ENCODE measurements at regions of chr11 and their contacts with region 1.

Region 1: GRCh38 chr11:14892036-14892567 is at the start of gene CYP2R1:
- DNase-seq: peak; percentile 98
- H3K4me3 ChIP-seq: peak within 1 kb of the TSS; percentile 69 to 91 (median 78)
- H3K27ac ChIP-seq: peak within 1 kb of the TSS; percentile 86 to 98 (median 92)
- H3K4me1 ChIP-seq: peaks cover 17 to 30% (median 22%) of the 10 kb centered on the region in 4 donors
- H3K27me3 ChIP-seq: no peaks in the 10 kb centered on the region
- CTCF ChIP-seq: no peak
- EP300 ChIP-seq: no peak
- POLR2A ChIP-seq: no peak
- total RNA-seq, gene CYP2R1: 7.5 to 19.1 (median 12.8) TPM

Region 2: DNA sequence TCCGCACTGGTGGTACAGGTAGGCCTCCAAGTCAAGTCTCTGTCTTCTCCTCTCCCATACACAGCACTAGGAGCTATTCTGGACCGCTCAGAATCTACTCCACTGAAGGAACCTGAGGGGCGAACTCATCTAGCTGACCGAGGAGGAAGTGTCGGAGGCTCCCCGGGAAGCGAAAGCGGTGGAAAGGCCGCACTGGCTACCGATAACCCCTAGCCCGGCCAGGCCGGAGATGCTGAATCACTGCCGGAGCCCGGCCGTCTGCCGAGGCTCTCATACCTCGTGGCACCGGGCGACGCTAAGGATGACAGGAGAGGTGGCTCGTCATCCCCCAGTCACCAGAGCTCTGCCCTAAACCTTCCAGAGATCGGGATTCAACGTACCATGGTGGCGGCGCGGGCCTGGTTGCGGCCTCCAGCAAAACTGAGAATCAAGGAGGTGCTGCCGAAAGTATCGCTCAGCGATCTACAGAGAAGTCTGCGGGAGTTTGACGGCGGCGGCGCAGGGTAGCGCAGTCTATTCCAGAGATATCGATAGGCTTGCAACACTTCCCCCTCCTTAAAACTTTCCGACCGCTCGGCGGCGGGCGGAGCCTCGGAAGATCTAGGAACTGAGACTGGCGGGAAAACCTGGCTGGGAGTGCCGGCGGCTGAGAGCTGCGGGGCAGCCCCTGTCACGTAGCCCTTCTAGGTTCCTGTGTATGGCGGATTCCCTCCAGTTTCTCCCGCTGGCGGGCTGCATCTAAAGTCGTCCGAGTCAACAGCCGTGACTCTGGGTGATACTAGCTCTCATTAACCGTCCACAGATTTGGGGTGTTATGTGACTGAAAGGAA is 372.0 kb before region 1 on chr11 and contains the start of gene PSMA1:
- intact Hi-C with region 1: loop called (anchors 2 kb)
- DNase-seq: peak; percentile 98
- H3K4me3 ChIP-seq: peak within 1 kb of the TSS; percentile 78 to 86 (median 79)
- H3K27ac ChIP-seq: peak within 1 kb of the TSS; percentile 84 to 89 (median 88)
- H3K4me1 ChIP-seq: peaks cover 13 to 25% (median 23%) of the 10 kb centered on the region in 4 donors
- H3K27me3 ChIP-seq: no peaks in the 10 kb centered on the region
- CTCF ChIP-seq: peak; percentile 40 to 75 (median 53)
- EP300 ChIP-seq: no peak
- POLR2A ChIP-seq: no peak
- total RNA-seq, gene PSMA1: 96.0 to 118 (median 110) TPM

Region 3: GRCh38 chr11:14643697-14644225 is 248.3 kb before region 1 on chr11 and contains the start of gene PDE3B:
- intact Hi-C with region 1: loop called (anchors 10 kb)
- DNase-seq: no peak
- H3K4me3 ChIP-seq: peak within 1 kb of the TSS; percentile 81 to 95 (median 82)
- H3K27ac ChIP-seq: peak within 1 kb of the TSS; percentile 88 to 95 (median 90)
- H3K4me1 ChIP-seq: peaks cover 10 to 66% (median 39%) of the 10 kb centered on the region in 4 donors
- H3K27me3 ChIP-seq: no peaks in the 10 kb centered on the region
- CTCF ChIP-seq: no peak
- EP300 ChIP-seq: no peak
- POLR2A ChIP-seq: no peak
- total RNA-seq, gene PDE3B: 13.3 to 23.3 (median 21.5) TPM